ENCODE measurements at regions of chr20 and their contacts with region 1.

Region 1: GRCh38 chr20:17682103-17682888 is at the start of gene RRBP1:
- DNase-seq: peak; percentile 97 to 100 (median 99)
- H3K4me3 ChIP-seq: peak within 1 kb of the TSS; percentile 50 to 97 (median 74)
- H3K27ac ChIP-seq: peak within 1 kb of the TSS in 57 of 59 donors; percentile 58 to 97 (median 90)
- H3K27me3 ChIP-seq: no peaks in the 10 kb centered on the region
- CTCF ChIP-seq: peak in 55 of 56 donors; percentile 39 to 84 (median 66)
- total RNA-seq, gene RRBP1: 25.5 to 102 (median 45.7) TPM

Region 2: DNA sequence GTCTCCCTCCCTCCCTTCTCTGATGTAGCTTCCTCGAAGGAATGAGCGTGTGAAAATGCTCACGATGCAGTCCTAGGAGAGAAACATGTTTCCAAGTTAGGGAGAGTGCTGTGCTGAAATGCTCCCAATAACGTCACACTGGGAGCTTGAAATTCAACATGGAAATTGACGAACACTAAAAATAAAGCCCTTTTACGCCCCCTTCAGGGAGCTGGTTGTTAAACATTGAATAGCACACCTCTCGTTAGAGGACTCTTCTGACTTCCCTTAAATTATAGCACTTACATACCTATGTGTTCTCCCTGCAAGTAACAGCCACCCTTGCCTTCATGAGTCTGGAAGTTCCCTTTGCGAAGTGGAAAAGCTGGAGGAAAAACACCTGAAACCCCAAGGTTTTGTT is 239.7 kb before region 1 on chr20:
- intact Hi-C with region 1: no loop called
- DNase-seq: no peak
- H3K4me3 ChIP-seq: no peak overlapping the region
- H3K27ac ChIP-seq: no peak overlapping the region
- H3K27me3 ChIP-seq: peaks cover 0 to 9% (median 0%) of the 10 kb centered on the region in 45 donors
- CTCF ChIP-seq: no peak

Region 3: DNA sequence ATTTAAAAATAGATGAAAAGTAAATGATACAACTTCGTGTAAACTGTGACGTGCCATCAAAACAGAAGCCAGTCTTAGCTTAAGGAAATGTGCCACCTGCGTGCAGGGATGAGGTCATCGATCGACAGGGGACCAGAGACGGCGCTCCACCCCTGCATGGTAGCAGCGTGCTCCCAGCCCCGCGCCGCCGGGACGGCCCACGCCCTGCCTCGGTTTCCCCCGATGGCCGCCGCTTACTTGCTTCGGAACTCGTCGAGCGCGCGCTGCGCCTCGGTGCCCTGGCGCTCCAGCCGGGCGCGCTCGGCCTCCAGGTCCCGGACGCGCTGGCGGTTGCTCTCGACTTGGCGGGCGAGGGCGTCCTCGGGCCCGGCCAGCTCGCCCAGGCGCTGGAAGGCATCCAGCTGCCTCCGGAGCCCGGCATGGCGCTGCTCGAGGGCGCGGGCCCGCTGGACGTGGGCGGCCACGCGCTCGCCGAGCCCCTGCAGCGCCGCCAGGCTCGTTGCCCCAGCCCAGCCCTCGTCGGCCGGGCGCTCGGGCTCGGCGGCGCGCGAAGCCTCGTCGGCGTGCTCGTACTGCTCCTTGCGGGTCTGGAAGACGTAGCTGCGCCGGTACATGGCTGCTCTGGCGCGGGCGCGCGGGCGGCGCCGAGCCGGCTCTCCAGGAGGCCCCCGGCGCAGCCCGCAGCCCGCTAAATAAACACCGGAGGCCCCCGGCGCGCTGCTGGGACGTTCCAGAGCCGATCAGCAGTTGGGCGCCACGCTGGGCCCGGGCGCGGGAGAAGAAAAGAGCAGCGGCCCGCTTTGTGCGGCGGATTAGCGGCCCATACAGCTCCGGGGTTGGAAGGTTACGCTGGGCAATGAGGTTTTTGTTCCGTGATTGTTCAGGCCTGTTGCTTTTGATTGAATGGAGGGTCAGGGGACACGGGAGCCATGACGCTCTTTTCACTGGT is 151.3 kb before region 1 on chr20 and contains the start of gene BFSP1:
- intact Hi-C with region 1: loop called (anchors 5 kb)
- DNase-seq: peak in 8 of 10 donors; percentile 26 to 73 (median 52)
- H3K4me3 ChIP-seq: peak within 1 kb of the TSS; percentile 34 to 76 (median 63)
- H3K27ac ChIP-seq: peak within 1 kb of the TSS in 46 of 59 donors; percentile 1 to 86 (median 68)
- H3K27me3 ChIP-seq: no peaks in the 10 kb centered on the region
- CTCF ChIP-seq: peak in 11 of 56 donors; percentile 5 to 38 (median 9)
- total RNA-seq, gene BFSP1: 0.67 to 6.9 (median 3.2) TPM

Region 4: GRCh38 chr20:17636523-17637412 is 45.5 kb before region 1 on chr20:
- intact Hi-C with region 1: loop called in 1 of 2 experiments (anchors 5 kb)
- DNase-seq: peak; percentile 31 to 89 (median 84)
- H3K4me3 ChIP-seq: peak overlapping the region in 21 of 59 donors; percentile 0 to 55 (median 24)
- H3K27ac ChIP-seq: peak overlapping the region in 58 of 59 donors; percentile 46 to 96 (median 84)
- H3K27me3 ChIP-seq: no peaks in the 10 kb centered on the region
- CTCF ChIP-seq: peak in 49 of 56 donors; percentile 11 to 64 (median 39)

Region 5: DNA sequence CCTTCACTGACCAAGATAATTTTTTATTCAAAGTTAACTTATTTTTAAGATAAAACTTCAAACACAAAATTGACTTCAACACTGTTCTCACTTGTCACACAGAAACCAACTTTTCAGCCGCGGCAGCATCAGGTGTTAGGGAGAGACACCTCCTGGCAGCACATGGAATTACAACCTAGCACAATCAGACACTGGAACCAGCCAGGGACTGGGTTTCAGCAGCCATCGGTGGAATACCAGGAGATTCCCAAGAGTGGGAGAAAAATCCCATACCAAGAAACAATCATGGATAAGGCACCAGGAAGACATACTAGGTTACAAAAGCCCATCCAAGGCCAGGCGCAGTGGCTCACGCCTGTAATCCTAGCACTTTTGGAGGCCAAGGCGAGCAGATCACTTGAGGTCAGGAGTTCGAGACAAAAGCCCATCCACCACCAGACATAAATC is 216.3 kb after region 1 on chr20:
- intact Hi-C with region 1: loop called (anchors 5 kb)
- DNase-seq: peak in 7 of 10 donors; percentile 36 to 86 (median 70)
- H3K4me3 ChIP-seq: no peak overlapping the region
- H3K27ac ChIP-seq: no peak overlapping the region
- H3K27me3 ChIP-seq: no peaks in the 10 kb centered on the region
- CTCF ChIP-seq: peak; percentile 78 to 96 (median 90)

Region 6: GRCh38 chr20:17968366-17969279 is 286.3 kb after region 1 on chr20 and contains the starts of genes MGME1 and SNX5:
- intact Hi-C with region 1: loop called (anchors 2 kb)
- DNase-seq: peak; percentile 98 to 99 (median 99)
- H3K4me3 ChIP-seq: peak within 1 kb of the TSS; percentile 64 to 99 (median 93)
- H3K27ac ChIP-seq: peak within 1 kb of the TSS; percentile 88 to 100 (median 99)
- H3K27me3 ChIP-seq: no peaks in the 10 kb centered on the region
- CTCF ChIP-seq: peak in 30 of 56 donors; percentile 5 to 53 (median 21)
- total RNA-seq, gene MGME1: 3.2 to 12.5 (median 6.9) TPM
- total RNA-seq, gene SNX5: 48.0 to 94.6 (median 62.3) TPM